OCI-LY7 (cell line): ENCODE measurements at regions of chr7 and their contacts with region 1.

Region 1: GRCh38 chr7:141014524-141015395 is at the start of gene MRPS33:
- DNase-seq: peak; percentile 97
- H3K4me3 ChIP-seq: peak within 1 kb of the TSS; percentile 87
- H3K27ac ChIP-seq: peak within 1 kb of the TSS; percentile 69
- H3K4me1 ChIP-seq: peaks cover 20% of the 10 kb centered on the region
- CTCF ChIP-seq: peak; percentile 85
- total RNA-seq, gene MRPS33: 21.1 and 42.0 TPM in 2 replicates

Region 2: GRCh38 chr7:140175221-140176121 is 839.3 kb before region 1 on chr7:
- CTCF ChIA-PET with region 1: no interaction called
- POLR2A ChIA-PET with region 1: no interaction called
- intact Hi-C with region 1: loop called (anchors 10 kb)
- DNase-seq: peak; percentile 91
- H3K4me3 ChIP-seq: peak overlapping the region; percentile 73
- H3K27ac ChIP-seq: peak overlapping the region; percentile 48
- H3K4me1 ChIP-seq: peaks cover 5% of the 10 kb centered on the region
- CTCF ChIP-seq: peak; percentile 94

Region 3: GRCh38 chr7:140517546-140518369 is 497.0 kb before region 1 on chr7:
- CTCF ChIA-PET with region 1: no interaction called
- POLR2A ChIA-PET with region 1: interaction called, 4 read pairs
- intact Hi-C with region 1: loop called (anchors 2 kb)
- DNase-seq: peak; percentile 66
- H3K4me3 ChIP-seq: no peak overlapping the region
- H3K27ac ChIP-seq: no peak overlapping the region
- H3K4me1 ChIP-seq: no peaks in the 10 kb centered on the region
- CTCF ChIP-seq: peak; percentile 77

Region 4: GRCh38 chr7:140696680-140697446 is 317.9 kb before region 1 on chr7 and contains the start of gene NDUFB2:
- CTCF ChIA-PET with region 1: no interaction called
- POLR2A ChIA-PET with region 1: interaction called, 5 read pairs
- intact Hi-C with region 1: loop called (anchors 1 kb)
- DNase-seq: peak; percentile 81
- H3K4me3 ChIP-seq: peak within 1 kb of the TSS; percentile 77
- H3K27ac ChIP-seq: peak within 1 kb of the TSS; percentile 66
- H3K4me1 ChIP-seq: peaks cover 21% of the 10 kb centered on the region
- CTCF ChIP-seq: peak; percentile 33; the same call in 1 of the 2 replicates
- total RNA-seq, gene NDUFB2: 139 and 158 TPM in 2 replicates

Region 5: GRCh38 chr7:140810830-140811556 is 203.8 kb before region 1 on chr7:
- CTCF ChIA-PET with region 1: interaction called, 4 read pairs
- POLR2A ChIA-PET with region 1: interaction called, 9 read pairs
- intact Hi-C with region 1: loop called (anchors 1 kb)
- DNase-seq: peak; percentile 69
- H3K4me3 ChIP-seq: no peak overlapping the region
- H3K27ac ChIP-seq: no peak overlapping the region
- H3K4me1 ChIP-seq: no peaks in the 10 kb centered on the region
- CTCF ChIP-seq: peak; percentile 90

Region 6: DNA sequence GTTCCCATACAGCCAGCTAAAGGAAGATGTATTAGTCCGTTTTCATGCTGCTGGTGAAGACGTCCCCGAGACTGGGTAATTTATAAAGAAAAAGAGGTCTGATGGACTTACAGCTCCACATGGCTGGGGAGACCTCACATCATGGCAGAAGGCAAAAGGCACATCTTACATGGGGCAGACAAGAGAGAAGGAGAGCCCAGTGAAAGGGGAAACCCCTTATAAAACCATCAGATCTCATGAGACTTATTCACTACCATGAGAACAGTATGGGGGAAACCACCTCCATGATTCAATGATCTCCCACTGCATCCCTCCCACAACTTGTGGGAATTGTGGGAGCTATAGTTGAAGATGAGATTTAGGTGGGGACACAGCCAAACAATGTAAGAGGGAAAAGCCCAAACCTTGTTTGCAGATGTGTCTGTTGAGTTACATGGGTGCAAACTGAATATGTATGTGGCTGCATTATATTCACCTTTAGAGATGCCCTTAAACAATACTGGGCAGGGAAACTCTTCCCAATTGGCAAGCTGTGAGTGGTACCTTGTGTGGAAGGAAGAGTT is 77.0 kb before region 1 on chr7:
- CTCF ChIA-PET with region 1: no interaction called
- POLR2A ChIA-PET with region 1: no interaction called
- intact Hi-C with region 1: no loop called
- DNase-seq: no peak
- H3K4me3 ChIP-seq: no peak overlapping the region
- H3K27ac ChIP-seq: no peak overlapping the region
- H3K4me1 ChIP-seq: no peaks in the 10 kb centered on the region
- CTCF ChIP-seq: no peak

Region 7: DNA sequence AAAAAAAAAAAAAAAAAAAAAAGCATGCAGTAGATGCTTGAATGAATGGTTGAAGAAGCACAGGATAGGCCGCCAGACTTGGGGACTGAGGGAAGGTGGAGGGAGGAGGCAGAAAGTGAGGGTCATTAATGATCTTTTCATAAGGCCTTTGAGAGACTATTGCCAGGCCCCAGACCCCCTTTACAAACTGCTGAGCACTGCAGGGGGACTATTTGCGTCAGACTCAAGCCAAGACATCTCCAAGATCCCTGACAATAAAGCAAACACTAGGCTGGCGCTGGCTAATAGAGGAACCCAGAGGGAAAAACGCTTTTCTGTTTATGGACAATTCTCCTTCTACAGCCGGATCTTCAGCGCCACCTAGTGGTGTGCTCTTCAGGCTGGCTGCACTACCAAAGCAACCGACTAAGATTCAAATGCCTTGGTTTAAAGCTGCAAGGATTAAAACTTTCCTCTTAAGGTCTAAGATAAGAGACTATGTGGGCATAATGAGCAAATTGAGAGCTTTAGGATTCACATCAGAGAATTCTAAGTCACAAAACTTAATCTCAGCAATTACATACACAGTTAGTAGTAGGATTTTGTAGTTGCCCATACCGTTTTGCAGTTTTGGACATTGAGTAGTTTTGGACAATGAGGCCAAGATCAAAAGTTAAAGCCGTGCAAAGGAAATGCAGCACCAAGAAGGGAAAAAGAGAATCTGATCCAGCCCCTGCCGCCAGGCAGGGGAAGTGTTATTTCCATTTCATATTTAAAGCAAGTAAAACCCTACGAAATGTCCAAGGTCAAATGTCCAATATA is 518.6 kb after region 1 on chr7:
- CTCF ChIA-PET with region 1: no interaction called
- POLR2A ChIA-PET with region 1: no interaction called
- intact Hi-C with region 1: loop called (anchors 5 kb)
- DNase-seq: peak; percentile 72
- H3K4me3 ChIP-seq: no peak overlapping the region
- H3K27ac ChIP-seq: no peak overlapping the region
- H3K4me1 ChIP-seq: no peaks in the 10 kb centered on the region
- CTCF ChIP-seq: peak; percentile 98